Activated CD4-positive, alpha-beta memory T cell treated with anti-CD3 and anti-CD28 coated beads for 36 hours (primary cell): ENCODE measurements at regions of chr6 and their contacts with region 1.

Region 1: GRCh38 chr6:100099189-100100074 is 105.4 kb upstream of the MCHR2 start:
- DNase-seq: no peak
- H3K4me3 Mint-ChIP-seq: no peak overlapping the region
- H3K27ac Mint-ChIP-seq: no peak overlapping the region
- H3K4me1 Mint-ChIP-seq: no peaks in the 10 kb centered on the region
- H3K27me3 Mint-ChIP-seq: peaks cover 12% of the 10 kb centered on the region

Region 2: DNA sequence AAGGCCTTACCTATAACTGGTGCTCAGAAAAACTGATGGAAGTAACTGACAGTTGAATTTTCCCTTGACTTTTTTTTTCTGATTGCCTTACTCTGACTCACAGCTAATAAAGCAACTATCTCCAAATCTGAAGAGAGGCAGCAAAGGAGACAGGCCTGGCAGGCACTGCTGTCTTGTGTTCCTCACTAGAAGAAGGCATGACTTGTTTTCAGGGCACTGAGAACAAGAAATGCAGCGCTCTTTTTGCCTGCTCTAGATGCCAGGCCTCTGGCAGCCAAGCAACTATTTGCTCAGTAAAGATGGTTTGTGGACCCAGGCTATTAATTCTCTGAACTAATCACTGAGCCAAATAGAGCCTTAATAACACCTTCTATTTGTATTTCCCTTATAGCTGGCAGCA is 337.7 kb before region 1 on chr6:
- CTCF ChIA-PET with region 1: no interaction called
- POLR2A ChIA-PET with region 1: no interaction called
- intact Hi-C with region 1: no loop called
- DNase-seq: no peak
- H3K4me3 Mint-ChIP-seq: no peak overlapping the region
- H3K27ac Mint-ChIP-seq: no peak overlapping the region
- H3K4me1 Mint-ChIP-seq: no peaks in the 10 kb centered on the region
- H3K27me3 Mint-ChIP-seq: no peaks in the 10 kb centered on the region

Region 3: GRCh38 chr6:100001915-100002388 is 97.5 kb before region 1 on chr6:
- CTCF ChIA-PET with region 1: interaction called, 73 read pairs
- POLR2A ChIA-PET with region 1: no interaction called
- intact Hi-C with region 1: loop called (anchors 1 kb)
- DNase-seq: peak; percentile 48
- H3K4me3 Mint-ChIP-seq: no peak overlapping the region
- H3K27ac Mint-ChIP-seq: no peak overlapping the region
- H3K4me1 Mint-ChIP-seq: no peaks in the 10 kb centered on the region
- H3K27me3 Mint-ChIP-seq: peaks cover 23% of the 10 kb centered on the region

Region 4: DNA sequence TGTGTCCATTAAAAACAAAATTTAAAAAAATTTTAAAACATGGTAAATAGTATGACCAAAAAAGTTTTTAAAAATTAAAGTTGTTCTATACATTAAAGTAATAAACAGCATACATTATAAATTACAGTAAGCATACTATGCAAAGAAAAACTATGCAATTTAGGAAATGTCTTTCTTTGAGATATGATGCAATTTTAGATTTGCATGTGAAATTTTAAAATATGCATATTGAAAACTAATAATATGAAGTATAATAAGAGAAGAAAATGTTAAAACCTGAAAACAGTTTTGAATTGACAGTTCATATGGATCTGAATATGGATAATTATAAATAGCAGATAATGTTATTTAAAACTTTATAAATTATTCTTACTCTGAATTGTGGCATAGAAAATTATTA is 738.6 kb after region 1 on chr6:
- CTCF ChIA-PET with region 1: no interaction called
- POLR2A ChIA-PET with region 1: no interaction called
- intact Hi-C with region 1: no loop called
- DNase-seq: no peak
- H3K4me3 Mint-ChIP-seq: no peak overlapping the region
- H3K27ac Mint-ChIP-seq: no peak overlapping the region
- H3K4me1 Mint-ChIP-seq: peaks cover 18% of the 10 kb centered on the region
- H3K27me3 Mint-ChIP-seq: no peaks in the 10 kb centered on the region